OCI-LY7 (cell line): ENCODE measurements at regions of chr2 and their contacts with region 1.

Region 1: GRCh38 chr2:36355151-36355889 is at the start of gene CRIM1:
- DNase-seq: peak; percentile 82
- H3K4me3 ChIP-seq: peak within 1 kb of the TSS; percentile 81
- H3K27ac ChIP-seq: peak within 1 kb of the TSS; percentile 70
- H3K4me1 ChIP-seq: peaks cover 53% of the 10 kb centered on the region
- CTCF ChIP-seq: no peak
- total RNA-seq, gene CRIM1: 24.5 and 37.0 TPM in 2 replicates

Region 2: DNA sequence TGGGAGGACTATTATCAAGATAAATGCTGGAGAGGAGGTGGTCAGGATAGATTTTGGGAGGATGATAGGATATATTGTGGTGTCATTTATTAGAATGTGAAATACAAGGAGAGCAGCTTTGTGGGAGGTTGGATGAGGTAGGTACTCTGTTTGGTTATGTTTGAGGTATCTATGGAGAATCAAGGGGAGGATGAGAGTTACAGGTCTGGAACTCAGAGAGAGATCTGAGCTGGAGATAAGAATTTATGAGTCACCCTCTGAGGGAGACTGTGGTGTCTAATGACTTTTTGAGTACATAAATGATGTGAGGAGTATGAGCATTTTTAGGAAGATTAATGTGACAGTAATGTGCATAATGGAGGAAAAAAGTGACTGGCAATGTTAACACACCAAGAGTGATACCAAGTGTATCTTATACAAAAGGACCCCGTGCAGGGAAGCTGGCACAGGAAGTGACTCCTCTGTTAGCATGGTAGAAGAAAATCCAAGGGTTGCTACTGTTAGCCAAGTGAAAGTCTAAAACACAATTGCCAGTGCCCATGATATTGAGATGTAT is 48.4 kb after region 1 on chr2:
- CTCF ChIA-PET with region 1: no interaction called
- POLR2A ChIA-PET with region 1: interaction called, 3 read pairs
- intact Hi-C with region 1: loop called (anchors 2 kb)
- DNase-seq: peak; percentile 22
- H3K4me3 ChIP-seq: peak overlapping the region; percentile 62
- H3K27ac ChIP-seq: peak overlapping the region; percentile 51
- H3K4me1 ChIP-seq: peaks cover 37% of the 10 kb centered on the region
- CTCF ChIP-seq: no peak

Region 3: GRCh38 chr2:36507408-36507812 is 152.1 kb after region 1 on chr2:
- CTCF ChIA-PET with region 1: no interaction called
- POLR2A ChIA-PET with region 1: interaction called, 3 read pairs
- intact Hi-C with region 1: loop called (anchors 1 kb)
- DNase-seq: peak; percentile 64
- H3K4me3 ChIP-seq: no peak overlapping the region
- H3K27ac ChIP-seq: no peak overlapping the region
- H3K4me1 ChIP-seq: no peaks in the 10 kb centered on the region
- CTCF ChIP-seq: peak; percentile 95

Region 4: DNA sequence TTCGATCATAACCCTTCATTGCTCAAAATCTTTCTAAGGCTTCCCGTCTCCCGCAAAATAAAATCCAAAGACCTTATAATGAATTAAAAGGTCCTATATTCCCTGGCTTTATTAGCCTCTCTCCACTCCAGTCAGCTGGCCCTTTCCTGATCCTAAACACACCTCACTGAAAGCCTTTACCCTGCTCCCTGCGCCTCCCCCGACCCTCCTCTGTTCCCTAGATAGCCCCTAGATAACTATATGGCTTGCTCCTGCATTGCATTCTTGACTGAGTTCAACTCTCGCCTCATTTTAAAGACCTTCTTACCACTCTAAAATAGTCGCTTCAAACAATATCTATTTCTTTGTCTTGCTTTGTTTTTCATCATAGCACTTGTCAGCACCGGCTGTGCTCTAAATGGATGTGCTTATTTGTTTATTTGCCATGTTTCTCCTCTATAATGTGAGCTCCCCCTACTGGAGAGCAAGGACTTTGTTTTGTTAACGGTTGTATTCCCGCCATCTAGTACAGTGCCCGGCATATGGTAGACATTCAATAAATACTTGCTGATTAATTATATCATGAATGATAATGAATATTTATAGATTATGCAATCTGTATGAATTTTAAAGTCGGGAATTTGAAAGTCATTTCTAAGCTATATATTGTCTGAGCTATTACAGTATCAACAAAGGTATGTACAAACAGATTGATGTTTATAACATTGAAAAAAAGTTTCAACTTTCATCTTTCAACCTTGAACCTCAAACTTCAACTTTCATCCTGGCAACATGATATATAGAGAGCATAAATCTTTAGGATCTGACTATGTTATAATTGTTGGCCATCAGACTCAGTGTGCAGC is 308.8 kb after region 1 on chr2:
- CTCF ChIA-PET with region 1: no interaction called
- POLR2A ChIA-PET with region 1: interaction called, 4 read pairs
- intact Hi-C with region 1: loop called (anchors 2 kb)
- DNase-seq: peak; percentile 58
- H3K4me3 ChIP-seq: no peak overlapping the region
- H3K27ac ChIP-seq: no peak overlapping the region
- H3K4me1 ChIP-seq: no peaks in the 10 kb centered on the region
- CTCF ChIP-seq: peak; percentile 91

Region 5: GRCh38 chr2:37083873-37084794 is 728.8 kb after region 1 on chr2 and contains the starts of genes GPATCH11 and HEATR5B:
- CTCF ChIA-PET with region 1: no interaction called
- POLR2A ChIA-PET with region 1: no interaction called
- intact Hi-C with region 1: loop called (anchors 10 kb)
- DNase-seq: peak; percentile 97
- H3K4me3 ChIP-seq: peak within 1 kb of the TSS; percentile 80
- H3K27ac ChIP-seq: peak within 1 kb of the TSS; percentile 52
- H3K4me1 ChIP-seq: peaks cover 62% of the 10 kb centered on the region
- CTCF ChIP-seq: no peak
- total RNA-seq, gene GPATCH11: 11.6 and 21.2 TPM in 2 replicates
- total RNA-seq, gene HEATR5B: 23.8 TPM in 2 replicates